CD8-positive, alpha-beta T cell (primary cell): ENCODE measurements at regions of chr1 and their contacts with region 1.

Region 1: GRCh38 chr1:204317170-204317569 is 42.6 kb downstream of the PLEKHA6 start:
- DNase-seq: no peak
- ATAC-seq: no peak
- H3K4me3 ChIP-seq: no peak overlapping the region
- H3K4me3 Mint-ChIP-seq: no peak overlapping the region
- H3K27ac ChIP-seq: no peak overlapping the region
- H3K27ac Mint-ChIP-seq: no peak overlapping the region
- H3K4me1 ChIP-seq: no peaks in the 10 kb centered on the region
- H3K4me1 Mint-ChIP-seq: no peaks in the 10 kb centered on the region
- H3K27me3 ChIP-seq: no peaks in the 10 kb centered on the region
- H3K27me3 Mint-ChIP-seq: no peaks in the 10 kb centered on the region
- CTCF ChIP-seq: no peak

Region 2: DNA sequence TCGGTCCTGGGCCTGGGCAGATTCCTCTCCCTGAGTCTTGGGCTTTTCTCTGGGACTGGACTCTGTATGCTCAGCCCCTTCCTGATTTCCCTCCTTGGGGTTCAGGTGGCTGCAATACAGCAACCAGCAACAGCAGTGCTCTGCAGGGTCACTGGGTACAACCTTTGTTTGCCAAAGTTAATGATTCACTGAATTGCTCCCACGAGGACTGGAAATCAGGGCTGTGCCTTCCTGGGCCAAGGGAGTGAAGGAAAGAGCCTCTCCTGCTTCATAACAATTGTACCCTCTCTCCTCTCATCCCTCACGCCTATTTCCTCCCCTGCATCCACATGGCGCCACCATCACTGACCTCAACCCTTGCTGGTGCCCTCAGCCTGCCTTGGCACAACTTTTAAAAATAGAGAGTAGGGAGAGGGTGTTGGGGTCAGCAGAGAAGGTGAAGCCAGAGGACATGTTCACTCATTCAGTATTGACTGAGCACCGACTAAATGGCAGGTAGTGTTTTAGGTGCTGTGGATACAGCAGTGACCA is 50.6 kb before region 1 on chr1:
- CTCF ChIA-PET with region 1: no interaction called
- POLR2A ChIA-PET with region 1: no interaction called
- intact Hi-C with region 1: no loop called
- DNase-seq: no peak
- ATAC-seq: no peak
- H3K4me3 ChIP-seq: no peak overlapping the region
- H3K4me3 Mint-ChIP-seq: no peak overlapping the region
- H3K27ac ChIP-seq: no peak overlapping the region
- H3K27ac Mint-ChIP-seq: no peak overlapping the region
- H3K4me1 ChIP-seq: no peaks in the 10 kb centered on the region
- H3K4me1 Mint-ChIP-seq: no peaks in the 10 kb centered on the region
- H3K27me3 ChIP-seq: no peaks in the 10 kb centered on the region
- H3K27me3 Mint-ChIP-seq: peaks cover 3% of the 10 kb centered on the region
- CTCF ChIP-seq: no peak

Region 3: DNA sequence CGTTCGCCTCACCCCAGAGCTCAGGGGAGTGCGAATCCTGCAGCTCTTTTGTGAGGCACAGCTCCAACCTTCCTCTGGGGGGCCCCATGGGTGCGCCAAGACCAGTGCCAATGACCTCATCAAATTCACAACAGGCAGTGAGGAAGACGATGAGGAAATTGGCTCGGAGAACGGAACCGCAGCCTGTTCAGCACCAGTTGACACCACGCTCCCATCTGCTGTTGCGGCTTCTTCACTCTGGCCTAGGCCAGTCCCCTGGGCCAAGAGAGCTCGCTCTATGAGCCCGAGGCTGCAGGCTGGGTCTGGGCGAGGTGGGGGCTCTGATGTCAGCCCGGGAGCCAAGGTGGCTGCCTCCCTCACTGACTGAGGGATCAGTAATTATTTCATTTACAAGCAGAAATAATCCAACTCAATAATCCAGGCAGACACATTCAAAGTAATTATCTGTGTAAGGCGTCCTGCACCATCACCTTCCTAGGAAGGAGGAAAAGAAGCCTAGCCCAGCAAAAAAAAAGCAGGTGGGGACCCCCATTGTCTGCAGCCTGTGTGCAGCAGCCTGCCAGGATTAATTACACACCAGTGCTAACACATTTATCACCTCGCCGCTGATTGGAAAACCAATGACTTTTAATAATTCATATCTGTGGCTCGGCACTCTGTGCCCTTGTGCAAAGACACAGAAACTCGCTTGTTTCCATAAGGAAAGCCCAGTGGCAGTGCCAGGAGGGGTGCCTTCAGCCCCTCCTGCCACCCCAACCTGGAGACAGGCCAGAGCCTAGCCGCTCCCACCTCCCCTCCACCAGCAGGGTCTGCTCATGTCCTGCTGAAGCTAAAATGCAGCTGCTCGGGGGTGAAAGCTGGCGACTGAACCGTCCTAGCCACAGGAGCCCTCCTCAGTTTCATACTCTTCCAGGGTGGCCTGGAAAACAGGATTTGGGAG is 40.7 kb after region 1 on chr1:
- CTCF ChIA-PET with region 1: no interaction called
- POLR2A ChIA-PET with region 1: no interaction called
- intact Hi-C with region 1: loop called in 1 of 2 experiments (anchors 1 kb)
- DNase-seq: no peak
- ATAC-seq: no peak
- H3K4me3 ChIP-seq: no peak overlapping the region
- H3K4me3 Mint-ChIP-seq: no peak overlapping the region
- H3K27ac ChIP-seq: no peak overlapping the region
- H3K27ac Mint-ChIP-seq: no peak overlapping the region
- H3K4me1 ChIP-seq: no peaks in the 10 kb centered on the region
- H3K4me1 Mint-ChIP-seq: no peaks in the 10 kb centered on the region
- H3K27me3 ChIP-seq: no peaks in the 10 kb centered on the region
- H3K27me3 Mint-ChIP-seq: peaks cover 4% of the 10 kb centered on the region
- CTCF ChIP-seq: no peak